Heart right ventricle (tissue), 16 donors: ENCODE measurements at regions of chr1 and their contacts with region 1.

Region 1: GRCh38 chr1:48049823-48050520 is 52.8 kb upstream of the TRABD2B start:
- DNase-seq: no peak
- ATAC-seq: peak in 3 of 8 donors; percentile 14 to 37 (median 27)
- H3K4me3 ChIP-seq: no peak overlapping the region
- H3K27ac ChIP-seq: no peak overlapping the region
- H3K4me1 ChIP-seq: peaks cover 0 to 33% (median 12%) of the 10 kb centered on the region in 9 donors
- H3K27me3 ChIP-seq: peaks cover 0 to 8% (median 0%) of the 10 kb centered on the region in 7 donors
- CTCF ChIP-seq: no peak

Region 2: GRCh38 chr1:48003741-48004511 is 46.0 kb before region 1 on chr1:
- intact Hi-C with region 1: loop called in 1 of 10 experiments (anchors 5 kb)
- DNase-seq: no peak
- ATAC-seq: no peak
- H3K4me3 ChIP-seq: no peak overlapping the region
- H3K27ac ChIP-seq: no peak overlapping the region
- H3K4me1 ChIP-seq: peaks cover 0 to 5% (median 0%) of the 10 kb centered on the region in 9 donors
- H3K27me3 ChIP-seq: peaks cover 0 to 27% (median 15%) of the 10 kb centered on the region in 7 donors
- CTCF ChIP-seq: no peak